Brain microvascular endothelial cell (primary cell): ENCODE measurements at regions of chr4 and their contacts with region 1.

Region 1: GRCh38 chr4:15001869-15002658 is at the start of gene CPEB2:
- DNase-seq: peak; percentile 94
- H3K4me3 ChIP-seq: peak within 1 kb of the TSS; percentile 81
- H3K27ac ChIP-seq: peak within 1 kb of the TSS; percentile 99
- H3K27me3 ChIP-seq: no peaks in the 10 kb centered on the region
- CTCF ChIP-seq: no peak

Region 2: GRCh38 chr4:13654158-13654797 is 1347.8 kb before region 1 on chr4:
- in situ Hi-C with region 1: loop called (anchors 25 kb)
- DNase-seq: peak; percentile 77
- H3K4me3 ChIP-seq: peak overlapping the region; percentile 65
- H3K27ac ChIP-seq: peak overlapping the region; percentile 37
- H3K27me3 ChIP-seq: no peaks in the 10 kb centered on the region
- CTCF ChIP-seq: peak; percentile 94